ENCODE measurements at regions of chr9 and their contacts with region 1.

Region 1: GRCh38 chr9:128987805-128988204 is 40.3 kb downstream of the NUP188 start:
- DNase-seq: peak; percentile 72
- H3K4me3 Mint-ChIP-seq: peak overlapping the region; percentile 33
- H3K27ac Mint-ChIP-seq: peak overlapping the region; percentile 67
- H3K4me1 Mint-ChIP-seq: peaks cover 18% of the 10 kb centered on the region
- H3K27me3 Mint-ChIP-seq: no peaks in the 10 kb centered on the region
- CTCF ChIP-seq: no peak

Region 2: GRCh38 chr9:128703616-128704355 is 284.0 kb before region 1 on chr9:
- CTCF ChIA-PET with region 1: no interaction called
- POLR2A ChIA-PET with region 1: no interaction called
- intact Hi-C with region 1: no loop called
- DNase-seq: no peak
- H3K4me3 Mint-ChIP-seq: no peak overlapping the region
- H3K27ac Mint-ChIP-seq: no peak overlapping the region
- H3K4me1 Mint-ChIP-seq: peaks cover 6% of the 10 kb centered on the region
- H3K27me3 Mint-ChIP-seq: no peaks in the 10 kb centered on the region
- CTCF ChIP-seq: no peak

Region 3: DNA sequence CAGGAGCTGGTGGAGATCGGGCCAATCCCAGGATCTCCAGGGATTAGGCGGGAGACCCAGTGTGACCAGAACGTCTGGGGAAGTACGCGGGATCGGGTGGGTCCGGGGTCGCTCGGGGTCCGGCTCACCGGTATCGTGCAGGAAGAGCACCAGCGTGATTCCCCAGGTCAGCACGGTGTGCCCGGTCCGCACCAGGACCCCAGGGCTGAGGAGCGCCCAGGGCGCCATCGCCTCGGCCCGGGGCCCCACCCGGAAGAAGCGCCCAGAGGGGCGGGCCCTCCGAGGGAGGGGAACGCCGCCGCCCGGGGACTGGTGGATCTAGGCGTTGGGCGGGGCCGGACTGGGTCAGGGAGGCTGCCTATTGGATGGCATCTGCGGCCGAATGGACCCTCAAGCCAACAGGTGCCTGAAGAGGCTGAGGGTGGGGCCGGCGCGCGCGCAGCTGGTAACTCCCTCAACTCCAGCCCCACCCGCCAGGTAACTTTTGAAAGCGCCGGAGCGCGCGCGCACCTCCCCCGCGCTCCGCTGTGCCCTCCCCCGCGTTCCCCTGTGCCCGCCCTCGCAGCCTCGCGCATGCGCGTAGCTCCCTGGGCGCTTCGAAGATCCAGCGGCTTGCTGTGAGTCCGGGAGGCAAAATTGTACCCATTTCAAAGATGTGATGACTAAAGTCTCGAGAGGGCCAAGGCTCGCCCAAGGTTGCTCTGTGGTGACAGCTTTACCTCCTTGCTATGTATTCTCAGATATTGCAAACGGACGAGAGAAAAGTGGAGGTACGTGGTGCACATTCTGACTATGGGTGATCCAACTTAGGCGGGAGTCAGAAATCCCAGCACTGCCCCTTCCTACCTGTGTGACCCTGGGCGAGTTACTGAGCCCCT is 263.7 kb before region 1 on chr9 and contains the start of gene ZDHHC12:
- CTCF ChIA-PET with region 1: no interaction called
- POLR2A ChIA-PET with region 1: no interaction called
- intact Hi-C with region 1: no loop called
- DNase-seq: peak; percentile 99
- H3K4me3 Mint-ChIP-seq: peak within 1 kb of the TSS; percentile 80
- H3K27ac Mint-ChIP-seq: peak within 1 kb of the TSS; percentile 79
- H3K4me1 Mint-ChIP-seq: peaks cover 36% of the 10 kb centered on the region
- H3K27me3 Mint-ChIP-seq: no peaks in the 10 kb centered on the region
- CTCF ChIP-seq: no peak
- total RNA-seq, gene ZDHHC12: 22.1 and 22.9 TPM in 2 replicates

Region 4: DNA sequence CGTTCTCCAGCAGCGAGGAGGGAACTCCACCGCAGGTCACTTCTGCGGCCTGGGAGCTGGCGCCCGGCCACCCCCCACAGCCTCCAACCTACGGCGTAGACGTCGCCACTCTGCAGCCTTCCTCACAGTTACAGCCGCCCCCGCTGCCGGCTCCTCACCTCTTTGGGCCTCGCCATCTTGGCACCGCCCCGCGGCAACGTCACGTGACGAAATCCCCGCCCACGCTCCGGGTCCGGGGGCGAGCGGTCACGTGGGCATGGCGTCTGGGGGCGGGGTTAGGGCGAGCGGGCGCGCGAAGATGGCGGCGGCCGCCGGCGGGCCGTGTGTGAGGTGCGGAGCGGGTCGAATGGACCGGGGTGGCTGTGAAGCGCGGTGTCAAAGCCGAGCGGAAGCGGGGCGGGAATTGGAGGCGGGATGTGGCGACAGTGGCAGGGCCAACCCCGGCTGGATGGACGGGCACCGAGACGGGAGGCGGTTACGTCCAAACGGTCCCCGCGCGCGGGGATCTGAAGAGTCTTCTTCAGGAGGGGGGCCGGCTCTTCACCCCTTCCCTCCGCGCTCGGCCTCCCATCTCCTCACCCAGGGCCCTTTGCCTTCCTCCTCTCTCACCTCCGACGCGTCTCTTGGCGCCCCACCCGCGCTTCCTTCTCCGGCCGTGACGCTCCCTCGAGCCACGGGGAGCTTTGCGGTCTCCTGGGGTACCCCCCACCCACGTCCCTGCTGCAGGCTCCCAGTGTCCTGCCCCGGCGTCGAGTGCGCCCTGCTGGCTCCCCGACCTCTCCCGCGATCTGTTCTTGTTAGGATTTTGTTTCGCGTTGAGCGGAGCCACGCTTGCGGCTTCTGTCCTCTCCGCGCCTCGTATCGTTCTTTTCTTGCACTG is 40.1 kb before region 1 on chr9 and contains the starts of genes DOLK and NUP188:
- CTCF ChIA-PET with region 1: interaction called, 7 read pairs
- POLR2A ChIA-PET with region 1: interaction called, 4 read pairs
- intact Hi-C with region 1: loop called (anchors 1 kb)
- DNase-seq: peak; percentile 94
- H3K4me3 Mint-ChIP-seq: peak within 1 kb of the TSS; percentile 83
- H3K27ac Mint-ChIP-seq: peak within 1 kb of the TSS; percentile 90
- H3K4me1 Mint-ChIP-seq: peaks cover 17% of the 10 kb centered on the region
- H3K27me3 Mint-ChIP-seq: no peaks in the 10 kb centered on the region
- CTCF ChIP-seq: no peak
- total RNA-seq, gene DOLK: 12.0 and 16.9 TPM in 2 replicates
- total RNA-seq, gene NUP188: 47.3 and 54.9 TPM in 2 replicates

Measured in MCF 10A (cell line).